ENCODE measurements at regions of chr6 and their contacts with region 1.

Region 1: GRCh38 chr6:63923139-63923739 is 287.6 kb downstream of the PHF3 start:
- DNase-seq: peak; percentile 55
- ATAC-seq: no peak
- H3K4me3 ChIP-seq: no peak overlapping the region
- H3K27ac ChIP-seq: no peak overlapping the region
- H3K4me1 ChIP-seq: no peaks in the 10 kb centered on the region
- H3K27me3 ChIP-seq: no peaks in the 10 kb centered on the region
- CTCF ChIP-seq: peak; percentile 57

Region 2: DNA sequence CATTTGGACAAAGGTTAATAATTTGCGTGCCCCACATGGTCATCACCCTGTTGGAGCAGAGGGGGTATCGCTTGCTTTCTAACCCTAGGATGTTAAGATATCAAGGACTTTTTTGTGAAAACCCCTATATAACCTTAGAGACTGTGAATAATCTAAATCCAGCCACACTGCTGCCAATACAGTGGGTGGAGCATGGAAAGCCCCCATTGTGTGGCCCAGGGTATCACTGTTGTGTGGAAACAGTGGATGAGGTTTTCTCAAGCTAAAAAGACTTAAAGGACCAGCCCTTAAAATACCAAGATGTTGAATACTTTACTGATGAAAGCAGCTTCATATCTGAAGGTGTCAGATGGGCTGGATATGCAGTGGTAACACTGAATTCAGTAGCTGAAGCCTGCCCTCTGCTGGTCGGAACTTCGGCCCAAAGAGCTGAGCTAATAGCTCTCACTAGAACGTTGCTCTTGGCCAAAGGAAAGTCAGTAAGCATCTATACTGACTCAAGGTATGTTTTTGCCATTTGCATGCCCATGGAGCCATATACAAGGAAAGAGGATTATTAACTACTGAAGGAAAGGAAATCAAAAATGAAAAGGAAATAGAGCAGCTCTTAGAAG is 407.6 kb after region 1 on chr6:
- CTCF ChIA-PET with region 1: no interaction called
- POLR2A ChIA-PET with region 1: no interaction called
- intact Hi-C with region 1: loop called (anchors 5 kb)
- DNase-seq: peak; percentile 86
- ATAC-seq: peak; percentile 80
- H3K4me3 ChIP-seq: no peak overlapping the region
- H3K27ac ChIP-seq: no peak overlapping the region
- H3K4me1 ChIP-seq: no peaks in the 10 kb centered on the region
- H3K27me3 ChIP-seq: no peaks in the 10 kb centered on the region
- CTCF ChIP-seq: peak; percentile 74

Measured in PC-3 (cell line).